Ovary (tissue), 10 donors: ENCODE measurements at regions of chr17 and their contacts with region 1.

Region 1: GRCh38 chr17:61251939-61252896 is 147.4 kb upstream of the TBX2 start:
- DNase-seq: peak; percentile 81 to 93 (median 87)
- H3K4me3 ChIP-seq: no peak overlapping the region
- H3K27ac ChIP-seq: no peak overlapping the region
- H3K4me1 ChIP-seq: peaks cover 4% of the 10 kb centered on the region
- H3K27me3 ChIP-seq: no peaks in the 10 kb centered on the region
- CTCF ChIP-seq: no peak
- EP300 ChIP-seq: peak; percentile 69
- POLR2A ChIP-seq: no peak

Region 2: DNA sequence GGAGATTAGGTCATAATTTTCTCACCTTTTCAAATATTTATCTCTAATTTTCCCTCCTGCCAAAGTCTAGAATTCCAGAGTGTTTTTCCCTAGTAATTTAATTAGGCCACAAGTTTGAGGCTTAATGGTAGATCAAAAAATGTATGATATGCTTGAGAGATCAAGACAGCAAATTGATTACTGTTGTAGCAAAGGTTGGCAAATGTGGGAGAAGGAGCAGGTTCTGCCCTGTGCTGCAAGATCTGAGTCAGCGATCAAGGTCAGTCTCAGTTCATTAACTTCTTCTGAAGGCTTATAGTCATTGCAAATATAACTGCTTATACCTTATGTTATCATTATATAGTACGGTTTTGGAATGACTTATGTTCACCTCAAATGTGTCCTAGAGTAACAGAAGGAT is 83.8 kb before region 1 on chr17:
- intact Hi-C with region 1: no loop called
- DNase-seq: no peak
- H3K4me3 ChIP-seq: no peak overlapping the region
- H3K27ac ChIP-seq: no peak overlapping the region
- H3K4me1 ChIP-seq: no peaks in the 10 kb centered on the region
- H3K27me3 ChIP-seq: no peaks in the 10 kb centered on the region
- CTCF ChIP-seq: no peak
- EP300 ChIP-seq: no peak
- POLR2A ChIP-seq: no peak

Region 3: GRCh38 chr17:61314368-61315078 is 62.3 kb after region 1 on chr17:
- intact Hi-C with region 1: loop called in 1 of 4 experiments (anchors 10 kb)
- DNase-seq: peak; percentile 50 to 66 (median 61)
- H3K4me3 ChIP-seq: no peak overlapping the region
- H3K27ac ChIP-seq: peak overlapping the region in 1 of 2 donors; percentile 62
- H3K4me1 ChIP-seq: peaks cover 15% of the 10 kb centered on the region
- H3K27me3 ChIP-seq: no peaks in the 10 kb centered on the region
- CTCF ChIP-seq: peak in 2 of 3 donors; percentile 26 to 31
- EP300 ChIP-seq: no peak
- POLR2A ChIP-seq: no peak

Region 4: GRCh38 chr17:61389670-61390478 is 137.7 kb after region 1 on chr17:
- intact Hi-C with region 1: loop called in 1 of 4 experiments (anchors 10 kb)
- DNase-seq: peak in 2 of 5 donors; percentile 55 to 70
- H3K4me3 ChIP-seq: no peak overlapping the region
- H3K27ac ChIP-seq: no peak overlapping the region
- H3K4me1 ChIP-seq: no peaks in the 10 kb centered on the region
- H3K27me3 ChIP-seq: no peaks in the 10 kb centered on the region
- CTCF ChIP-seq: peak; percentile 47 to 55 (median 48)
- EP300 ChIP-seq: no peak
- POLR2A ChIP-seq: no peak